GM12878 (cell line): ENCODE measurements at regions of chr11 and their contacts with region 1.

Region 1: DNA sequence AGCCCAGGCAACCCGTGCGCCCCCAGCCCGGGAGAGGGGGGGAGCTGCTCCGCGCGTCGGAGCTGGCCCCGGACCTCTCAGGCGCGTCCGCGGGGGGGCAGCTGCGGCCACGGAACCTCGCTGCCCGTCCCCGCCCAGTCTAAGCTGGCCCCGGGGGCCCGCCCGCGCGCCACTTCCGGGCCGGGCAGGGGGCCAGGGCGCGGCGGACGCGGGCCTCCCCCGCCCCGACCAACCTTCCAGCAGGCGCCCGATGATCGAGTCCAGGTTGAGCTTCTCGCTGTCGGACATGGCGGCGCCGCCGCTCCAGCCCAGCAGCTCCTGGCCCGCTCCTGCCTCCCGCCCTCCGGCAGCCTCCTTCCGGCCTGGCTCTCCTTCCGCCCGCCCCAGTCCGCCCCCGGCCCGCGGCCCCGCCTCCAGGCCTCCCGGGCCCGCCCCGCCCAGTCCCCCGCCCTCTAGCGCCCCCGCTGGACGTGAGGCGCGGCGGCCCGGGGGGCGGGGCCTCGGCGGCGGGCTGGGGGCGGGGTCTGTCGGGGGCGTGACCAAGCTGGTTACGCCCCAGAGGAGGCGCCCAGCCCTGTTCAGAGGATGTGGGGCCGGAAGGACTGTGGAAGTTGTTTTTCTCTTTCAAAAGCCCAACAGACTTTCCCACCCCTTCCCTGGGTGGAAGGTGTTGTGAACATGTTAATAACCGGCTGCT is at the start of gene PPP1CA:
- DNase-seq: no peak
- ATAC-seq: peak; percentile 77
- H3K4me3 ChIP-seq: peak within 1 kb of the TSS; percentile 80
- H3K27ac ChIP-seq: peak within 1 kb of the TSS; percentile 99
- H3K4me1 ChIP-seq: peaks cover 50% of the 10 kb centered on the region
- H3K27me3 ChIP-seq: no peaks in the 10 kb centered on the region
- CTCF ChIP-seq: peak in 2 of 3 experiments; percentile 36 to 41; a peak in 3 of 6 replicates
- EP300 ChIP-seq: no peak
- POLR2A ChIP-seq: peak; percentile 96
- RAD21 ChIP-seq: peak; percentile 31; the same call in 1 of the 2 replicates
- polyA plus RNA-seq, gene PPP1CA: 26.4 to 41.7 TPM

Region 2: GRCh38 chr11:67345920-67346799 is 55.5 kb before region 1 on chr11:
- CTCF ChIA-PET with region 1: interaction called, 15 read pairs
- POLR2A ChIA-PET with region 1: interaction called, 55 read pairs
- RAD21 ChIA-PET with region 1: interaction called, 27 read pairs
- SMC1A ChIA-PET with region 1: interaction called, 3 read pairs
- in situ Hi-C with region 1: no loop called
- intact Hi-C with region 1: no loop called
- DNase-seq: peak; percentile 24
- ATAC-seq: peak; percentile 72
- H3K4me3 ChIP-seq: no peak overlapping the region
- H3K27ac ChIP-seq: peak overlapping the region; percentile 35
- H3K4me1 ChIP-seq: peaks cover 52% of the 10 kb centered on the region
- H3K27me3 ChIP-seq: no peaks in the 10 kb centered on the region
- CTCF ChIP-seq: peak; percentile 88 to 97 (median 93); a peak in 5 of 6 replicates
- EP300 ChIP-seq: no peak
- POLR2A ChIP-seq: no peak
- RAD21 ChIP-seq: peak; percentile 69

Region 3: GRCh38 chr11:67391304-67392132 is 10.1 kb before region 1 on chr11 and contains the start of gene RAD9A:
- CTCF ChIA-PET with region 1: interaction called, 17 read pairs
- POLR2A ChIA-PET with region 1: interaction called, 48 read pairs
- RAD21 ChIA-PET with region 1: interaction called, 21 read pairs
- SMC1A ChIA-PET with region 1: interaction called, 17 read pairs
- in situ Hi-C with region 1: no loop called
- intact Hi-C with region 1: no loop called
- DNase-seq: no peak
- ATAC-seq: peak; percentile 90
- H3K4me3 ChIP-seq: peak within 1 kb of the TSS; percentile 97
- H3K27ac ChIP-seq: peak within 1 kb of the TSS; percentile 78
- H3K4me1 ChIP-seq: peaks cover 7% of the 10 kb centered on the region
- H3K27me3 ChIP-seq: no peaks in the 10 kb centered on the region
- CTCF ChIP-seq: no peak
- EP300 ChIP-seq: peak; percentile 22 to 64; a peak in 2 of 4 replicates
- POLR2A ChIP-seq: peak; percentile 83
- RAD21 ChIP-seq: no peak
- polyA plus RNA-seq, gene RAD9A: 1.1 to 3.6 TPM

Region 4: DNA sequence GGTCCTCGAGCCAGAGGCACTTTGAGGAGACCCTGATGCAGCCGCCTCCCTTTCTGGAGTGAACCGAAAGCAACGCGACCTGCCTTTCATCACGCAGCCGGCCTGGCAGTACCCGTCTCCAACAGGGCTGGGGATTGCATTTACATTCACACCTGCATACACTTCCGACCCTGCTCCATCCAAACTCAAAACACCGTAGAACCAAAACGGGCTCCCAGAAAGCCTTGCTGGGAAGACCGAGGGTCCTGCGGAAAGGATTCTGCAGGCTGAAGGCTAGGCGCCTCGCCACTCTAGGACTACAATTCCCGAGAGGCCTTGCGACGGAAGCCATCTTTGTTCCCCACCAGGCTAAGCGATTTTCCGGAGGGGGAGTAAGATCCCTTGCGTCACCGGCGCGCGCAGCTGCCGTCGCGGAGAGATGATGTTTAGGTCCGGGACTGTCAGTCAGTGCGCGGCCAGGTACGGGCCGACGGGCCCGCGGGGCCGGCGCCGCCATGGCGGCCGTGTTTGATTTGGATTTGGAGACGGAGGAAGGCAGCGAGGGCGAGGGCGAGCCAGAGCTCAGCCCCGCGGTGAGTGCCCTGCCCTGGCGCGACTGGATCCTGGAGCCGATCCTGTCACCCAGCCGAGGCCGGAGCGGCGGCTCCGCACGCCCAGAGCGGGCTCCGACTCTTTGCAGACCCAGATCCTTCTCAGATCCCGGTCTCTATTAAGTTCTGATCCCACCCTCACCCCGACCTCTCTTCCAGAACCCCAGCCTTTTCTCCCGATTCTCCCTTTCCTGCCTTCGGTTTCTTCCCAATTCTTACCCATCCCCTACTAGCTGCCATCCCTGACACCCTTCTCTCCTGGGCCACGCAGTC is 26.6 kb after region 1 on chr11 and contains the start of gene RPS6KB2:
- CTCF ChIA-PET with region 1: interaction called, 3 read pairs
- POLR2A ChIA-PET with region 1: interaction called, 28 read pairs
- RAD21 ChIA-PET with region 1: interaction called, 112 read pairs
- SMC1A ChIA-PET with region 1: interaction called, 10 read pairs
- in situ Hi-C with region 1: no loop called
- intact Hi-C with region 1: no loop called
- DNase-seq: peak; percentile 95
- ATAC-seq: peak; percentile 85
- H3K4me3 ChIP-seq: peak within 1 kb of the TSS; percentile 100
- H3K27ac ChIP-seq: peak within 1 kb of the TSS; percentile 69
- H3K4me1 ChIP-seq: no peaks in the 10 kb centered on the region; the same call in 1 of the 2 replicates
- H3K27me3 ChIP-seq: no peaks in the 10 kb centered on the region
- CTCF ChIP-seq: no peak
- EP300 ChIP-seq: no peak
- POLR2A ChIP-seq: peak; percentile 87
- RAD21 ChIP-seq: no peak
- polyA plus RNA-seq, gene RPS6KB2: 0.39 to 2.3 TPM

Region 5: GRCh38 chr11:67458266-67458665 is 56.6 kb after region 1 on chr11:
- CTCF ChIA-PET with region 1: interaction called, 7 read pairs
- POLR2A ChIA-PET with region 1: interaction called, 30 read pairs
- RAD21 ChIA-PET with region 1: interaction called, 13 read pairs
- SMC1A ChIA-PET with region 1: interaction called, 5 read pairs
- in situ Hi-C with region 1: no loop called
- intact Hi-C with region 1: no loop called
- DNase-seq: no peak
- ATAC-seq: no peak
- H3K4me3 ChIP-seq: no peak overlapping the region
- H3K27ac ChIP-seq: no peak overlapping the region
- H3K4me1 ChIP-seq: peaks cover 19% of the 10 kb centered on the region
- H3K27me3 ChIP-seq: no peaks in the 10 kb centered on the region
- CTCF ChIP-seq: no peak
- EP300 ChIP-seq: no peak
- POLR2A ChIP-seq: no peak
- RAD21 ChIP-seq: no peak

Region 6: DNA sequence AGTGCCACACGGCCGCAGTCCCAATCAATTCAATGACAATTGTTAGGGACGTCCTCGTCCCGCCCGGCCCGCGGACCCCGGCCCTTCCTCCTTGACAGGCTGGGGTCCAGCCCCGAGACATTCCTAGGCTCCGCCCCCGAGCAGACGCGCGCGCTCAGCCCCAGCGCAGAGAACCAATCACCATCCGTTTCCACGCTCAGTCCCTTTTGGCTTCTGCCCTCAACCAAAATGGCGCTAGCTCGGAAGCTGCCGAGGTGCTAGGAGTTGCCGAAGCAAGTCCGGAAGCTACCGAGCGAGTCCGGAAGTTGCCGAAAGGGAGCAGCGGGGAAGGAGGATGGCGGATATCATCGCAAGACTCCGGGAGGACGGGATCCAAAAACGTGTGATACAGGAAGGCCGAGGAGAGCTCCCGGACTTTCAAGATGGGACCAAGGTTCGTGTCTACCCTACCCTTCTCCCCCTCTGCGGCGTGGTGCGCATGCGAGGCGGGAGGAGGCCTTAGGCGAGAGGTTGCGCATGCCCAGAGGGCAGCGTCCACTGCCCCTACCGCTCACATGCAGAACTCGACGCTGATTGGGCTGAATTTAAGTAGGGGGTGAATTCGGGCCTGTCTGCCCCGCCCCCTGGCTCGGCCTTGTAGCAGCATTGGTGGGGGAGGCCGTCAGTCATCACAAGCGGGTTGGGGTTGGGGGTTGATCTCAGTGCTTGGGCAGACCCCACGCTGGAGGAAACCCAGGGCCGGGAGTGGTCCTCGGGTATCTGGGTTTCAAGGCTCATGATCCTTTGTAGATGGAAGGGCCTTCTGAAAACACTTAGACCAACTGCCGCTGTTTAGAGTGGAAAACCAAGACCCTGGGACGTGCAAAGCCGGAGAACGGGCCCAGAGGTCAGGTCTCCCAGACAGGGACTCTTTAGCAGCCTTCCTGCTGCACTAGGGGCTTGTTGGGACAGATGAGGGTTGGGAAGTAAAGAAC is 81.5 kb after region 1 on chr11 and contains the start of gene AIP:
- CTCF ChIA-PET with region 1: interaction called, 37 read pairs
- POLR2A ChIA-PET with region 1: interaction called, 112 read pairs
- RAD21 ChIA-PET with region 1: interaction called, 95 read pairs
- SMC1A ChIA-PET with region 1: interaction called, 5 read pairs
- in situ Hi-C with region 1: no loop called
- intact Hi-C with region 1: loop called (anchors 2 kb)
- DNase-seq: peak; percentile 97
- ATAC-seq: peak; percentile 77
- H3K4me3 ChIP-seq: peak within 1 kb of the TSS; percentile 67
- H3K27ac ChIP-seq: peak within 1 kb of the TSS; percentile 70
- H3K4me1 ChIP-seq: peaks cover 43% of the 10 kb centered on the region
- H3K27me3 ChIP-seq: no peaks in the 10 kb centered on the region
- CTCF ChIP-seq: peak in 1 of 3 experiments; percentile 19; a peak in 1 of 6 replicates
- EP300 ChIP-seq: no peak
- POLR2A ChIP-seq: peak; percentile 78
- RAD21 ChIP-seq: no peak
- polyA plus RNA-seq, gene AIP: 12.6 to 29.7 TPM